OCI-LY7 (cell line): ENCODE measurements at regions of chr5 and their contacts with region 1.

Region 1: DNA sequence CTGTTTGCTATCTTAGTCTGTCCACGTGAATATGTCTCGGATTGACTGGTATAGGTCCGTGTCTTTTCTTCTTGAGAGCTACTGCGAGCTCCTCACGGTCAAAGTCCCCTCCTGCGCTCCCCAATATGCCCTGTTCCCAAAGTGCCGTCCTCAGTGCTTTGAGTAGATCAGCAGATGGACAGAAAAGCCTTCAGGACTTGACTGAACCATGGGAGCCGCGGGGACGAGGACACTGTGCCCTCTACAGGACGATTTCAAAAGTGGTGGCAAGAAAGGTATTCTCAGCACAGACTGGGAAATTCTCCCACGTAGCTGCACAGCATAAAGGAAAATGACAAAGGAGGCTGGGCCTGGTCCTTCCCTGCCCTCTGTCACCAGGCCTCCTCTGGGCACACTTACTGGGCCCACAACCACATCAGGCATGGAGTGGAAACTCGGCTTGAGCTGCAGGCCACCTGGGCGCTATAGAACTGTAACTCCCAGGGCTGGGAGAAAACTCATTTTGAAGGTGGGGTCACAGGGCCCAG is 16.6 kb upstream of the MTMR12 start:
- DNase-seq: peak; percentile 74
- H3K4me3 ChIP-seq: no peak overlapping the region
- H3K27ac ChIP-seq: no peak overlapping the region
- H3K4me1 ChIP-seq: peaks cover 3% of the 10 kb centered on the region
- CTCF ChIP-seq: peak; percentile 88

Region 2: DNA sequence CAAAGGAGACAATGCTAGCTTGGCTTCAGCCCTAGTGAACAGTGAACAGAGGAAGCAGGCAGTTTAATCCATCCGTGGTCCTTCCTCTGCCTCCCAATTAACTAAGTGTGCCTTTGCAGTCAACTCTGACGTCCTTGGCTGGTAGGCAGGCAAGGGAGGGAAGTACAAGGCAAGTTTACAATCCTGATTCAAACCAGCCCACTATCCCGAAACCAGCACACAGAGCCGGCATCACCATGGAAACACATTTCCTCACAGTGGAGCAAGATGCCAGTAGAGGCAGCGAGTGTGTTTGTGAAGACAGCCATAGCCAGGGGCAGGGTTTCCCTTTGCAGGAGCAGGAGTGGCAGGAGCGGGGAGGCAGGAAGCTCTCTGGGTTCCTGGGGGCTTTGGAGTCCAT is 229.1 kb before region 1 on chr5:
- CTCF ChIA-PET with region 1: no interaction called
- POLR2A ChIA-PET with region 1: no interaction called
- intact Hi-C with region 1: loop called (anchors 10 kb)
- DNase-seq: no peak
- H3K4me3 ChIP-seq: no peak overlapping the region
- H3K27ac ChIP-seq: no peak overlapping the region
- H3K4me1 ChIP-seq: no peaks in the 10 kb centered on the region
- CTCF ChIP-seq: no peak

Region 3: GRCh38 chr5:32232441-32233219 is 96.7 kb before region 1 on chr5:
- CTCF ChIA-PET with region 1: interaction called, 28 read pairs
- POLR2A ChIA-PET with region 1: interaction called, 3 read pairs
- intact Hi-C with region 1: loop called (anchors 1 kb)
- DNase-seq: peak; percentile 78
- H3K4me3 ChIP-seq: no peak overlapping the region
- H3K27ac ChIP-seq: no peak overlapping the region
- H3K4me1 ChIP-seq: no peaks in the 10 kb centered on the region
- CTCF ChIP-seq: peak; percentile 91

Region 4: DNA sequence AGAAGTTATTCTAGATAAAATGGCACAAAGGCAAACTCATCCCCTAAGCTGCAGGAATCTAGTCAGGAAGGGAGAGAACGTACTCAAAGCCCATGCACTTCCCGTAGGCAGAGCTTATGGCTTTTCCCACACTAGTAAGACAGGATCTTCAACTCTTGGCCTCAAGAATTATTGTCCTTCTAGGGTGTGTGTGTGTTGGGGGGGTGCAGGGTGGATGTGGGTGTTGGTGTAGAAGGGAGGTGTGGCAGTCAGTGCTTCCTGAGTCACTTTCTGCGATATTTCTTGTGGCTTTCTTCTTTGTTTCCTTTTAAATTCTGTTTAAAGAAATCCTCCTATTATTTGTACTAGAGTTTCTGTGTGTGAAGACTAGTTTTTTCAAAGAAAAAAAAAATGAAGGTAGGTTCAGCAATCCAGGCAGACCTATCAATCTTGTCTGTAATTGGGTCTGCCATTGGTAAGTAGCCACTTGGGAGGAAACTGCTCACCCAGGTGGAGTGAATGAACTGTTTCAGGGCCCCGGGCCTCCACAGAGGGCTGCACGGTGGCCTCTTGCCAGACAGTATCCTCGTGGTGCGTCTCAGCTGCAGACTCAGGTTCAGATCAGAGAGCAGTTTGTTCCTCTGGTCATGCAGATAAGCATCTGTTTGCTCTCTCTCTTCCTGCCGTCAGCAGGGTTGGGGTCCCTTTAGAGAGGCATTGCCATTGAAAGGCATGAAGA is 513.6 kb after region 1 on chr5:
- CTCF ChIA-PET with region 1: no interaction called
- POLR2A ChIA-PET with region 1: no interaction called
- intact Hi-C with region 1: no loop called
- DNase-seq: no peak
- H3K4me3 ChIP-seq: no peak overlapping the region
- H3K27ac ChIP-seq: no peak overlapping the region
- H3K4me1 ChIP-seq: no peaks in the 10 kb centered on the region
- CTCF ChIP-seq: no peak